Activated CD8-positive, alpha-beta T cell treated with anti-CD3 and anti-CD28 coated beads for 36 hours (primary cell): ENCODE measurements at regions of chr12 and their contacts with region 1.

Region 1: GRCh38 chr12:96489103-96490056 is at the start of gene CFAP54:
- DNase-seq: peak; percentile 97
- ATAC-seq: peak; percentile 96
- H3K4me3 Mint-ChIP-seq: peak within 1 kb of the TSS; percentile 84
- H3K27ac Mint-ChIP-seq: peak within 1 kb of the TSS; percentile 53
- H3K4me1 Mint-ChIP-seq: peaks cover 29% of the 10 kb centered on the region
- H3K27me3 Mint-ChIP-seq: no peaks in the 10 kb centered on the region
- CTCF ChIP-seq: peak; percentile 89
- total RNA-seq, gene CFAP54: 0.38 to 0.45 TPM

Region 2: DNA sequence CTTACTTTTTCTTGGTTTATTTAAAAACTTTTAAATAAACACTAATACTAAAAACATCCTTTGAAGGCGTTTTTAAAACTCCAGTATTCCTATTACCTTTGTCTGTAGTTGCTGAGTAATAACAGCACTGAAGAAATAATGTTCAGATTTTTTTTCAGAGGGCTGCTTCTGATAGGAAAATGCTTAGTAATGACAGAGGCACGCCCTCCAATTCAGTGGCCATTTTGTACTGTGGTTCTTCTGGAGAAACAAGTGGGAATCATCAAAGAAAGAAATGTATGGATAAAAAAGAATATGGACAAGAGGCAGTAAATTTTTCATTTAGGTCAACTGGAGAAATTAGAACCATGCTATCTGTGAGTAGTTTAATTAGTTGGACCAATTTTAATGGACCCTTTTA is 1258.2 kb before region 1 on chr12:
- CTCF ChIA-PET with region 1: no interaction called
- POLR2A ChIA-PET with region 1: no interaction called
- intact Hi-C with region 1: no loop called
- DNase-seq: no peak
- ATAC-seq: no peak
- H3K4me3 Mint-ChIP-seq: no peak overlapping the region
- H3K27ac Mint-ChIP-seq: no peak overlapping the region
- H3K4me1 Mint-ChIP-seq: peaks cover 28% of the 10 kb centered on the region
- H3K27me3 Mint-ChIP-seq: no peaks in the 10 kb centered on the region
- CTCF ChIP-seq: no peak

Region 3: GRCh38 chr12:96501139-96501761 is 11.9 kb after region 1 on chr12:
- CTCF ChIA-PET with region 1: interaction called, 21 read pairs
- POLR2A ChIA-PET with region 1: interaction called, 4 read pairs
- intact Hi-C with region 1: no loop called
- DNase-seq: peak; percentile 46
- ATAC-seq: peak; percentile 77
- H3K4me3 Mint-ChIP-seq: no peak overlapping the region
- H3K27ac Mint-ChIP-seq: peak overlapping the region; percentile 88
- H3K4me1 Mint-ChIP-seq: peaks cover 36% of the 10 kb centered on the region
- H3K27me3 Mint-ChIP-seq: no peaks in the 10 kb centered on the region
- CTCF ChIP-seq: no peak

Region 4: DNA sequence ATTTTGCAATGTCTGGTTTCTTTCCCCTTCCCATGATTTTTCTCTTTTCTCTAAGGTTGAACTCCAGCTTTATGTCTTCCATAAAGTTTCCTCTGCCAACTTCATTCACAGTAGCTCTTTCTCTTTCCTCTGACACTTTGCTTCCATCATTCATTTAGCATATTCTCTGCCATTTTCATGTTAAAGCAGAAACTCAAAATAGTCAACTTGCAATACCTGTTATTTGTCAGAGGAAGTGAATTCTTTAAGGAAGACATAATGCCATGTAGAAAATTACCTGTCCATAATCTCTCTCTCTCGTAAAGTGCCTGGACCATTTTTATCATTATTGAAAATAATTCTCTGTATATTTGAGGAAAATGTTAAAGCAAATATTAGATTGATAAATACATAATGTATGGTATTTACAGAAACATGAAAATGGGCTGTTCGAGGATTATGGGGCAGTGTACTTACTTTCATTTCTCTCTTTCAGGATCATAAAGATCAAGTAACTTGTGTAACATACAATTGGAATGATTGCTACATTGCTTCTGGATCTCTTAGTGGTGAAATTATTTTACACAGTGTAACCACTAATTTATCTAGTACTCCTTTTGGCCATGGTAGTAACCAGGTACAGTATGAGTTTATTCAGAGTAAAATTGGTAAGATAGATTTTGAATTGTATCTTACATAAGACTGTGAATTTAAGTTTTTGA is 430.3 kb after region 1 on chr12:
- CTCF ChIA-PET with region 1: no interaction called
- POLR2A ChIA-PET with region 1: no interaction called
- intact Hi-C with region 1: no loop called
- DNase-seq: no peak
- ATAC-seq: no peak
- H3K4me3 Mint-ChIP-seq: no peak overlapping the region
- H3K27ac Mint-ChIP-seq: no peak overlapping the region
- H3K4me1 Mint-ChIP-seq: peaks cover 21% of the 10 kb centered on the region
- H3K27me3 Mint-ChIP-seq: no peaks in the 10 kb centered on the region
- CTCF ChIP-seq: no peak